PC-9 (cell line): ENCODE measurements at regions of chr6 and their contacts with region 1.

Region 1: GRCh38 chr6:24340998-24341938 is 16.6 kb downstream of the DCDC2 start:
- DNase-seq: peak in 1 of 2 experiments; percentile 82
- H3K4me3 ChIP-seq: no peak overlapping the region
- H3K27ac ChIP-seq: no peak overlapping the region
- H3K4me1 ChIP-seq: peaks cover 12% of the 10 kb centered on the region; the same call in 1 of the 2 replicates
- H3K27me3 ChIP-seq: no peaks in the 10 kb centered on the region
- CTCF ChIP-seq: no peak

Region 2: DNA sequence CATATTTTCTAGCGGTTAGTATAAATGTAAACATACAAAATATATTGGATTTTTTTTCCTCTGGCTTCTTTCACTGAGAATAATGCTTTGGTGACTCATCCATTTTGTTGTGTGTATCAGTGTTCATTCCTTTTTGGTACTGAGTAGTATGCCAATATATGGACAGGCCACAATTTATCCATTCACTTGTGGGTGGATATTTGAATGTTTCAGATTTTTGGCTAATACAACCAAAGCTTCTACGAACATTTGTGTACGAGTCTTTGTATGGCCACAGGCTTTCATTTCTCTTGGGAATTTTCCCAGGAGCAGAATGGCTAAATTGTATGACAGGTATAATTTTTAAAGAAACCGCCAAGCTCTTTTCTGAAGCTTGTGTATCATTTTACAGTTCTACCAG is 1094.4 kb before region 1 on chr6:
- CTCF ChIA-PET with region 1: no interaction called
- POLR2A ChIA-PET with region 1: interaction called, 11 read pairs
- intact Hi-C with region 1: no loop called
- DNase-seq: no peak
- H3K4me3 ChIP-seq: no peak overlapping the region
- H3K27ac ChIP-seq: no peak overlapping the region
- H3K4me1 ChIP-seq: no peaks in the 10 kb centered on the region
- H3K27me3 ChIP-seq: no peaks in the 10 kb centered on the region
- CTCF ChIP-seq: no peak

Region 3: DNA sequence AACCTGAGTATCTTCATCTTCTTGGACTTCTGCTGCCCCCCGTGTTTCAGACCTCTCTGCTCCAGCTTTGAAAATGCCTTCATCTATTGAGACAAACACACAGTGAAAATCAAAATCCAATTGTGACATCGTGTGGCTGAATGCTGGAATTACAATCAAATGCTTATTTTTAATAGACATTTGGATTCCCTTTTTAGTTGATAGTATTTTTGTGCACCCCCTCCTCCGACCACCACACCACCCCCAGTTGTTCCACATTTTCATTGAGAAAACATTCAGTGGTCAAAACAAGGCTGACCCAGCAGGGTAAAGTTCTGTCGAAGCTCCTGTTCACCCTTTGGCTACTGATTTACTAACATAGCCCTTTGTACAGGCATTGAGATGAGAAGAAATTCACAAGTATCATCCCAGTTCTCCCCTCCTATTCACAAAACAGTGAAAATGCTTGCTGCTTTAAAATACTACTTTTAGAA is 136.2 kb before region 1 on chr6:
- CTCF ChIA-PET with region 1: no interaction called
- POLR2A ChIA-PET with region 1: no interaction called
- intact Hi-C with region 1: no loop called
- DNase-seq: peak in 1 of 2 experiments; percentile 7
- H3K4me3 ChIP-seq: no peak overlapping the region
- H3K27ac ChIP-seq: no peak overlapping the region
- H3K4me1 ChIP-seq: no peaks in the 10 kb centered on the region
- H3K27me3 ChIP-seq: no peaks in the 10 kb centered on the region
- CTCF ChIP-seq: peak; percentile 75

Region 4: DNA sequence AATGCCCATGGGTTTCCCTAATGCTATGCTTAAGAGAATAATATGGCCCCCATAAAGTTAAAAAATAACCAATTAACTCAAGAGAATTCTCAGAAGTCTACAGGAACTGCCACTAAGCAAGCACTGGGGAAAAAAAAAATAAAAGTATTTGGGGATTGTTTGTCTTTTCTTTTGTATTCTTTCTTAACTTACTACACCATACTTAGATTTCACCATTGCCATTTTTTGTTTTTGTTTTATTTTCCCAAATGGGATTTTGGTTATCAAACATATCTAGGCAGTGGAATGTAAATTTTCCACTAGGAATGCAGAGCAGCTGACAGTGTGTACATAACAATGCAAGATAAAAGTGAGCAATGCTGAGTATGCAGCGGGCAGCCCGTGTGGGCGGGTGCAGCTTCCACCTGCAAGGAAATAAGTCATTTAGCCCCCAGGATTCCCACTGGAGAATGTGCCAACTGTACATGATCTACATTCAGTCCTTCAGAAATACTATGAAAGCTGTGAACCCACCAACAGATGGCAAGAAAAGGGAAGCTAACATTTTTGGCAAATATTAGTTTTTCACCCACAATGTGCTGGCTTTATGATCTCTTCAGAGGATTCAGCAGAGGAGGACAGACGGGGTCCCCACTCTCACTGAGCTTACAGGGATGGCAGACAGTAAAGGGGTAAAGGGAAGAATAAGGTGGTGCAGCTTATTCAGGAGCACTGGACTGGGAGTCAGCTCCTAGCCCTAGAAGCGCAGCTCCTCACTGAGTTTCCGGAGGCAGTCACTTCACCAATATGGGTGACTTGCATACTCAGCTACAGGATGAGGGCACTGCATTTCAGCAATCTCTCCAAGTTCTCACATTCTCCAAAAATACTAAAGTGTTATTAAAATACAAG is 27.8 kb before region 1 on chr6:
- CTCF ChIA-PET with region 1: no interaction called
- POLR2A ChIA-PET with region 1: no interaction called
- intact Hi-C with region 1: no loop called
- DNase-seq: peak; percentile 70 to 86
- H3K4me3 ChIP-seq: 0 out of 2 replicates have a peak overlapping the region, but pooled peaks have one; percentile 6
- H3K27ac ChIP-seq: no peak overlapping the region
- H3K4me1 ChIP-seq: peaks cover 14% of the 10 kb centered on the region
- H3K27me3 ChIP-seq: no peaks in the 10 kb centered on the region
- CTCF ChIP-seq: no peak